ENCODE measurements at regions of chr16 and their contacts with region 1.

Region 1: GRCh38 chr16:12819126-12820117 is 15.7 kb upstream of the CPPED1 start:
- DNase-seq: peak; percentile 88
- H3K4me3 Mint-ChIP-seq: no peak overlapping the region
- H3K27ac Mint-ChIP-seq: no peak overlapping the region
- H3K4me1 Mint-ChIP-seq: peaks cover 4% of the 10 kb centered on the region
- H3K27me3 Mint-ChIP-seq: no peaks in the 10 kb centered on the region

Region 2: GRCh38 chr16:12455287-12455798 is 364.1 kb before region 1 on chr16:
- CTCF ChIA-PET with region 1: interaction called, 6 read pairs
- POLR2A ChIA-PET with region 1: no interaction called
- intact Hi-C with region 1: loop called (anchors 2 kb)
- DNase-seq: peak; percentile 67
- H3K4me3 Mint-ChIP-seq: no peak overlapping the region
- H3K27ac Mint-ChIP-seq: no peak overlapping the region
- H3K4me1 Mint-ChIP-seq: peaks cover 16% of the 10 kb centered on the region
- H3K27me3 Mint-ChIP-seq: no peaks in the 10 kb centered on the region

Measured in activated CD4-positive, alpha-beta memory T cell treated with anti-CD3 and anti-CD28 coated beads for 36 hours (primary cell).